ENCODE measurements at regions of chr7 and their contacts with region 1.

Region 1: GRCh38 chr7:110891197-110891596 is 199.7 kb upstream of the LRRN3 start:
- DNase-seq: no peak
- ATAC-seq: no peak
- H3K4me3 ChIP-seq: no peak overlapping the region
- H3K27ac ChIP-seq: no peak overlapping the region
- H3K4me1 ChIP-seq: no peaks in the 10 kb centered on the region
- H3K27me3 ChIP-seq: no peaks in the 10 kb centered on the region
- CTCF ChIP-seq: no peak
- POLR2A ChIP-seq: no peak

Region 2: GRCh38 chr7:110356438-110356837 is 534.8 kb before region 1 on chr7:
- intact Hi-C with region 1: no loop called
- DNase-seq: no peak
- ATAC-seq: no peak
- H3K4me3 ChIP-seq: no peak overlapping the region
- H3K27ac ChIP-seq: no peak overlapping the region
- H3K4me1 ChIP-seq: no peaks in the 10 kb centered on the region
- H3K27me3 ChIP-seq: no peaks in the 10 kb centered on the region
- CTCF ChIP-seq: no peak
- POLR2A ChIP-seq: no peak

Region 3: DNA sequence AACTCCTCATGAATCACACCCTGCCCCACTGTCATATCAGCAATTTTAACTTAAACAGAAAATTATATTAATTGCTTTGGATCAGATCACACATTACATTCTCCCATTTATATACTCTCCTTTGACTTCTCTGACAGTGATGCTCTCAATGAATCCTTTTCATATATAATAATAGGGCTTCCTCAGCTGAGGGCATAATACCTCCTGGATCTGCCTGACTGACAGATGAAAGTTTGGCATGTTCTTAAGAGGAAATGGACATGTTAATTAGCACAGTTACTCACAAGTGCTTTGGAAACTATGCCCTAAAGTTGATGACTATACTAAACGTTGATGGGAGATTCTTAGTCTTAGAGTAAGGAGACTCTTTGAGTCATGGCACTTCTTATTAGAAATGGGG is 278.5 kb before region 1 on chr7:
- intact Hi-C with region 1: loop called (anchors 10 kb)
- DNase-seq: no peak
- ATAC-seq: no peak
- H3K4me3 ChIP-seq: no peak overlapping the region
- H3K27ac ChIP-seq: no peak overlapping the region
- H3K4me1 ChIP-seq: no peaks in the 10 kb centered on the region
- H3K27me3 ChIP-seq: no peaks in the 10 kb centered on the region
- CTCF ChIP-seq: no peak
- POLR2A ChIP-seq: no peak

Region 4: DNA sequence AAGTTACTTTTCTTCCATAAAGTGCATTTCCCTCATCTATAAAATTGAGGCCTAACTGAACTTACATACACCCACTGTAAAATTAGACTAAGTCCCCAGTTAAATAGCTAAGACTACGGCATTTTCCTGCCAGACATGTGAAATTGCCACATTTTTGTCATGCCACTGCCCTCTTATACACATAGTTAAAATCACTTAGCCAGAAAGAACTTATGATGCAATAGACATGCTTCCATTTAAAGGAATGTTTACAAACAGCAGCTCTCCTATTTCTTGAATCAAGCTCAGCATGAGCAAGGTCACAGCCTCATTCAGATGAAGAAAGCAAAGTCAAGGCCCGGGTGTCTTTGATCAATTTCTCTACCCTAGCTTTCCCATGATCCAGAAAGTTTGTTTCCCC is 375.4 kb after region 1 on chr7:
- intact Hi-C with region 1: no loop called
- DNase-seq: no peak
- ATAC-seq: no peak
- H3K4me3 ChIP-seq: no peak overlapping the region
- H3K27ac ChIP-seq: no peak overlapping the region
- H3K4me1 ChIP-seq: no peaks in the 10 kb centered on the region
- H3K27me3 ChIP-seq: no peaks in the 10 kb centered on the region
- CTCF ChIP-seq: no peak
- POLR2A ChIP-seq: no peak

Measured in body of pancreas (tissue), 4 donors.